Activated CD4-positive, alpha-beta memory T cell treated with anti-CD3 and anti-CD28 coated beads for 36 hours (primary cell): ENCODE measurements at regions of chr22 and their contacts with region 1.

Region 1: DNA sequence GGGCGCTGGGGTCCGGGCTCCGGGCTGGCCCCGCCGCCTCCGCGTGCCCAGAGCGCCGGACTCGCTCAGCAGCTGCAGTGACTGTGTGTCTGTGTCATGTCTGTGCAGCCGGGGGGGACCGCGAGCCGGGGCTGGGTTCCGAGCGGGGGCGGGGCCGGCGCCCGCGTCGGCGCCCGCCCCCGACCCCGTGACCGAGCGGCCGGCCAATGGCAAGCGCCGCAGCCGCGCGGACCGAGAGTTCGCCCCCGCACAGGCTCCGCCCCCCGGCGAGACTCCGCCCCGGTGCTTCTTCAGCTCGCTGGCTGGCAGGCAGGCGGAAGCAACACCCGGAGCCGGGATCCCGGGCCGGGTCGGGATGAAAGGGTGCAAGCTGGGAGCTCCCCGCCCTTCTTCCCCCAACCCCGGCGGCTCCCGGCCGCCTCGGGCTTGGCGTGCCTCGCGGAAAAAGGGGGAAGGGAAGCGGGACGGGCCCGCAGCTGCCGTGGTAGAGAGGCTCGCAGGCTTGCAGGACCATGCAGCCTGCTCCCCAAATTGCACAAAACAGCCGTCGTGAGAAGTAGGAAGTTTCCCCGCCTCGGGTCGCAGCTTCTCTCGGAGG is 750 bp upstream of the LARGE1 start:
- DNase-seq: peak; percentile 91
- H3K4me3 Mint-ChIP-seq: peak overlapping the region; percentile 62
- H3K27ac Mint-ChIP-seq: no peak overlapping the region
- H3K4me1 Mint-ChIP-seq: peaks cover 16% of the 10 kb centered on the region
- H3K27me3 Mint-ChIP-seq: peaks cover 56% of the 10 kb centered on the region

Region 2: DNA sequence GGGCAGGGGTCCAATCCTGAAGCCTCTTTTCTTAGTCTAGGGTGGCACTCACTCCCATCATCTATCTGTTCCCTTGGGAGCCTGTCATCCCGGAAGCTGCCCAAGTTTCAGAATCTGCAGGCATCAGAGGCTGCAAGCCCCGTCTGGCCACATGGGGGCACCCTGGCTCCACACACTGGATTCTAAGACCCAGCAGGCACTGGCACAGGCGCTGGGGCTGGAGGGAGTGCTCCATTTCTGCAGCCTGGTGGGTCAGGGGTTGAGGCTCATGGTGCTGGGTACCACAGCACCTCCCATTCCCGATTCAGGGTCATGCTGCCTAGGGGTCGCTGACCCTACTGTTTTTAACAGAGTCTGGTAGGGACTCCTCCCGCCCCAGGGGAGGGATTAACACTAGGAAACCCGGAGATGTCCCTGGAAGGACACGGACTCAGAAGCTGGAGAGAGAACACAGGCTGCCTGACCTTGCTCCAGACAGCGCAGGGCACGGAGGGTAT is 618.9 kb before region 1 on chr22:
- CTCF ChIA-PET with region 1: no interaction called
- POLR2A ChIA-PET with region 1: no interaction called
- intact Hi-C with region 1: loop called (anchors 5 kb)
- DNase-seq: peak; percentile 68
- H3K4me3 Mint-ChIP-seq: no peak overlapping the region
- H3K27ac Mint-ChIP-seq: no peak overlapping the region
- H3K4me1 Mint-ChIP-seq: no peaks in the 10 kb centered on the region
- H3K27me3 Mint-ChIP-seq: no peaks in the 10 kb centered on the region

Region 3: DNA sequence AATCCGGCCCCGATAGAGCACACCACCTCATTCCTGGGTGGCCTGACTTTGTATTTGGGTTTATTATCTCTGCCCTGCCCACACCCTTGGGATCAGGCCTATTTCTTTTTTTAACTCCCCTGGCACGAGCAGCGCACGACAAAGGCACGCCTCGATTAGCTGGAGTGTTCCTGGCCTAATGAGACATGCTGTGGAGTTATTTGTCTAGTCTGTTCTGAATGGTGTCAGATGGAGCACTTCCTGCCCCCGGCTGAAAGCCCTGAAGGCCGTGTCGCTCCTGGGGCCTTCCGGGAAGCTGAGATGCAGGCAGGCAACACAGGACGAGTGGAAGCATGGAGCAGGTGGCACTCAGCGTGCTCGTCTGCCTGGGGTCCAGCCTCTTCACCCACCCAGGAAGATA is 47.8 kb before region 1 on chr22:
- CTCF ChIA-PET with region 1: no interaction called
- POLR2A ChIA-PET with region 1: no interaction called
- intact Hi-C with region 1: no loop called
- DNase-seq: no peak
- H3K4me3 Mint-ChIP-seq: no peak overlapping the region
- H3K27ac Mint-ChIP-seq: no peak overlapping the region
- H3K4me1 Mint-ChIP-seq: no peaks in the 10 kb centered on the region
- H3K27me3 Mint-ChIP-seq: no peaks in the 10 kb centered on the region

Region 4: DNA sequence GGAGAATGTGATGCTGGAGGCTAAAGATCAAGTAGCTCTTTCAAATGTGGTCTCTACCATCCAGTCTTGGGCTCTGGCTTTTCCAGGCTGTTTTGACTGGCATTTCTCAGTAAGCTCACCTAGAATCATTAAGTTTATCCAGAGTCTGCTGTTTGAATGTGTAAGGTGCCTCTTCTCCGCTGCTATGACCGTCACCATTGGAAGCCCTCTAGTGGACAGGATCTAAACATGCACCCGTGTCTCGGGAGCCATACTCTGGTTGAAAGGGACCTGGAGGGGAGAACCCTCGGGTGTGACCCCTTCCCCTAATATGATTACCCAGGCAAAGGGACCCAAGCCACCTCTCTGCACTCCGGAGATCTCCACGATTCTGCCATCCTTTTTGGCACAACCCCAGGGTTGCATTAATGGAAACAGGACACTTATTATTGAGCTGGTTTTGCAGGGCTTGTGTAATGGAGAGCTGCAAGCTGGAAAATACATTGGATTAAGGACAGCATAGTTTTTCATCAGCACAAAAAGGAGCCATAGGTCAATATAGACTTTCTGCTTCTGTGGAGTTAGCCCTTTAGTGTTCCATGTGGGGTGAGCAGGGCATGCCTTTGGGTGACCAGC is 190.3 kb after region 1 on chr22:
- CTCF ChIA-PET with region 1: no interaction called
- POLR2A ChIA-PET with region 1: no interaction called
- intact Hi-C with region 1: loop called (anchors 2 kb)
- DNase-seq: peak; percentile 16
- H3K4me3 Mint-ChIP-seq: no peak overlapping the region
- H3K27ac Mint-ChIP-seq: no peak overlapping the region
- H3K4me1 Mint-ChIP-seq: no peaks in the 10 kb centered on the region
- H3K27me3 Mint-ChIP-seq: no peaks in the 10 kb centered on the region

Region 5: DNA sequence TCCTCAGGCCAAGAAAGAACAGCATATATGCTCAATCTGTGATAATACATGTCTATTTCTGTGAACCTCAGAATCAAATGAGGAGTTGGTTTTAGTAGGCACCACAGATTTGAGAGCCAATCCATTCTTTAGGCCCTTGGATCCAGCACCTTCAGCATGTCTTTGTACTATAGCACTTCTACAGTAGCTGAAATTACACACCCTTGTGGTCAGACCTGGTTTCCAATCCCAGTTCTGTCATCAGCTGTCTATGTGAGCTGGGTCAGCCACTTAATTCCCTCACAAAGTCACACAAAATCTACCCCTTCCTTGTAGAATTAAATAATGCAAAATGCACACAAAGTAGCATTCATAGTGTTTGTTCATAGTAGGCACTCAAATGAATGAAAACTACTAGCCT is 380.5 kb after region 1 on chr22:
- CTCF ChIA-PET with region 1: no interaction called
- POLR2A ChIA-PET with region 1: no interaction called
- intact Hi-C with region 1: no loop called
- DNase-seq: no peak
- H3K4me3 Mint-ChIP-seq: no peak overlapping the region
- H3K27ac Mint-ChIP-seq: no peak overlapping the region
- H3K4me1 Mint-ChIP-seq: no peaks in the 10 kb centered on the region
- H3K27me3 Mint-ChIP-seq: no peaks in the 10 kb centered on the region